Left ventricle myocardium inferior (tissue), 1 donor: ENCODE measurements at regions of chr2 and their contacts with region 1.

Region 1: DNA sequence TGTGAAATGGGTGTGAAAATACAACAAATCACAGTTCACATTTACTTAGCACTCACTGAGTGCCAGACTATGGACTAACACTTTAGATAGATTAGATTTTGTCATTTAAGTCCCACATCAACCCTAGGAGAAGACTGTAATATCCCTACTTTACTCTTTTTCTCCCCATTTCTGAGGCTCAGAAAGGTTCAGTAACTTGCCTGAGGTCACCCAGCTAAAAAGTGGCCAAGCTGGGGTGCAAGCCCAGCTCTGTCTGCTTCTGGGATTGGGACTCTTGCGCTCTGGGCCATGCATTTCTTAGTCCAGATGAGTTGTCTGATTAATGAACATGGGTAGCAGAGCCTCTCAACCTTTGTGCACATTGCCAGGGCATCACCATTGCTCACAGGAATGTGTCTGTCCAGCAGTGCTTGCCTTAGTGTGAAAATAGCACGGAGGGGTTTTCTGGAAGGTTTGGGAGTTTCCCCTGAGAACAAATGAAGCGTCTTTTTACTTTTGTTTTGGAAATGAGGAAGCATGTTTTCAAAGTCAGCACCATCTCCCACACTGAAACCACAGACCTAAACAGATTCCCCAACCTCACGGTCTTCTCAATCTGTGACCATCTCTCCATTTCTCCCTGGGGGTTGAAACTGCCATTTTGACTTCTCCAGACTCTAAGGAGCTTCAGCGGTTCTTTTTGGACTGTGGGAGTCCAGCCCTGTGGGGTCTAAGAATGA is 31.9 kb downstream of the NRP2 start:
- DNase-seq: no peak
- H3K4me3 ChIP-seq: no peak overlapping the region
- H3K27ac ChIP-seq: peak overlapping the region; percentile 13
- H3K4me1 ChIP-seq: peaks cover 10% of the 10 kb centered on the region
- H3K27me3 ChIP-seq: no peaks in the 10 kb centered on the region
- CTCF ChIP-seq: no peak

Region 2: GRCh38 chr2:205738117-205738968 is 24.1 kb after region 1 on chr2:
- intact Hi-C with region 1: loop called (anchors 2 kb)
- DNase-seq: no peak
- H3K4me3 ChIP-seq: no peak overlapping the region
- H3K27ac ChIP-seq: peak overlapping the region; percentile 2
- H3K4me1 ChIP-seq: peaks cover 17% of the 10 kb centered on the region
- H3K27me3 ChIP-seq: no peaks in the 10 kb centered on the region
- CTCF ChIP-seq: no peak